Activated CD4-positive, alpha-beta memory T cell treated with anti-CD3 and anti-CD28 coated beads, Interleukin-2, amount 10 ng/mL, durations not matched to agents 7 days and 5 days (primary cell): ENCODE measurements at regions of chrX and their contacts with region 1.

Region 1: DNA sequence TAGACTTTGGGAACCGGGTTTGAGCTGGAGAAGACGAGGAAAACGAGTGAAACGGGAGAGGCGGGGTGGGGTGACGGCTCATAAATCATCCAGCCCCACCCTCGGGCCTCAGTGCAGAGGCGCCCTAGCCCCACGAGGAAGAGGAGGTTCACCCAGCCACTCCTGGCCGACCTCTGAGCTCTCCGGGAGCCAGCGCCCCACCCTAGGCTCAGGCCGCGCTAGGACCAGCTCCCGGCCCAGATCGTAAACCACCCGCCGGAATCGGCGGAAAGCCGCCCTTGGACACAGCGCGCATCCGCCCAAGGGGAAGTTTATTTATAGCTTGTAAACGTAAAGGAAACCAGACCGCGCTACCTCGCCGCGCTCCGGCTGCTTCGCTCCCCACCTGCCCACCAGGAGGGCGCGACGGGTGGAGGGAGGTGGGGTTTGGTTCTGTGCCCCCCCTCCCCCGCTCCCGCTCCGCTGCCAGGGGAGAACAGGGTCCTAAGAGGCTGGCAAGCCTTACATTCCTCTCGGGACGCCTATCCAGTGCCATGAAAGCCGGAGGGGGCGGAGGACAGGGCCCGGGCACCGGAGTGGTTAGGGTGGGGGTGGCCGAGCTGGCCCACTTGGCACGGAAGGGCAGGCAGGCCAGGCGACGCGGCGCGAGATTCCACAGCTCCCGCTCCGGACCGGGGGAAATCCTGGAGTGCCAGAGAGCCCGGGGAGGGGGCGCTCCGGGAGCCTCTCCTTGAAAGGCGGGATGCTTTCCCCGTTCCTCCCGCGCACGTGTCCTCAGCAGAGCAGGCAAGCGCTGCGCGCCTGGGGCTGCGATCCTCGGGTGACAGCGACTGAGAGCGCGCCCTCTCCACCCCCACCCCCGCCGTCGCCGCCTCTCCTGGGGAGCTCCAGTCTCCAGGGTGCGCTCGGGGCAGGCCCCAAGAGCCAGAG is 84.2 kb downstream of the BCOR start:
- DNase-seq: peak; percentile 60
- H3K4me3 Mint-ChIP-seq: peak overlapping the region; percentile 73
- H3K27ac Mint-ChIP-seq: peak overlapping the region; percentile 64
- H3K4me1 Mint-ChIP-seq: peaks cover 31% of the 10 kb centered on the region
- H3K27me3 Mint-ChIP-seq: peaks cover 24% of the 10 kb centered on the region

Region 2: GRCh38 chrX:39815631-39816030 is 197.9 kb before region 1 on chrX:
- CTCF ChIA-PET with region 1: interaction called, 3 read pairs
- POLR2A ChIA-PET with region 1: interaction called, 12 read pairs
- DNase-seq: no peak
- H3K4me3 Mint-ChIP-seq: no peak overlapping the region
- H3K27ac Mint-ChIP-seq: no peak overlapping the region
- H3K4me1 Mint-ChIP-seq: peaks cover 30% of the 10 kb centered on the region
- H3K27me3 Mint-ChIP-seq: peaks cover 10% of the 10 kb centered on the region

Region 3: DNA sequence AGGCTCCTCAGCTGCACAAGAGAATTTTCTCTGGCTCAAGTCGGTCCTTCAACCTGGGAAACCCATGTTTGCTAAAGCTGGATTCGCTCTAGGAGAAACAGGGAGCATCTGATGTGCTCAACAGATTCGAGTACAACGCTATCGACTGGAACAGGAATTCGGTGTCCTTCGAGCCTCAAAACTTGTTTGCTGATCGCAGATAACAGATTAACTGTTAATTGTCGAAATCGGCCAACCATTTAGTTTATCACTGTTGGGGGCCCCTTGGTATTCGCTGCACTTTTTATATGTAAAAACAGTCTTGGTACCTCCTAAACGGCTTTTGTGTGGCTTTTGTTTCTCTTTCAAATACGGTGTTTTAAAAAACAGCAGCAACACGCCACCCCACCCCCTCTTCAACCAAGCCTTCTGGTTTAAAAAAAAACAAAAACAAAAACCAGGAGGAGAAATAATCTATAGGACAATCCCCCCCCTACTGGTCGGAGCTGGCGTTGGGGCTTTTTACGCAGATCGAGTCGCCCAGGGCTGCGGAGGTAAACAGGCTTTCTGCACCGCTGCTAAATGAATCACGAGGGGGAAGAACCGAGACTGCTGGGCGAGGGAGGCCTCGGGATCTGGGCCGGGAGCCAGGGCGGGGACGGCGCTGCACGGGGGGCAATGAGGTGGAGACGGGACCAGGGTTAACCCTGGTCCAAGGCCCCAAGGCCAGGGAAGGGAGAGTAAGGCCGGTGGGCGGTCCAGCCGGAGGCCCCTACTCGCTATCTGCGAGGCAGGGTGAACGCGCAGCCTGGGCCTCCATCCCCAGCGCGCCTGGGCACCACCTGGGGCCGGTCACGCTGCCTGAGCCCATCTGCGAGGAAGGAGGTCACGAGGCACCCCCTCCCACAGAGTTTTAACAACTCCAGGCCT is 155.9 kb after region 1 on chrX:
- CTCF ChIA-PET with region 1: interaction called, 3 read pairs
- POLR2A ChIA-PET with region 1: interaction called, 10 read pairs
- DNase-seq: peak; percentile 88
- H3K4me3 Mint-ChIP-seq: peak overlapping the region; percentile 83
- H3K27ac Mint-ChIP-seq: peak overlapping the region; percentile 97
- H3K4me1 Mint-ChIP-seq: peaks cover 55% of the 10 kb centered on the region
- H3K27me3 Mint-ChIP-seq: no peaks in the 10 kb centered on the region

Region 4: DNA sequence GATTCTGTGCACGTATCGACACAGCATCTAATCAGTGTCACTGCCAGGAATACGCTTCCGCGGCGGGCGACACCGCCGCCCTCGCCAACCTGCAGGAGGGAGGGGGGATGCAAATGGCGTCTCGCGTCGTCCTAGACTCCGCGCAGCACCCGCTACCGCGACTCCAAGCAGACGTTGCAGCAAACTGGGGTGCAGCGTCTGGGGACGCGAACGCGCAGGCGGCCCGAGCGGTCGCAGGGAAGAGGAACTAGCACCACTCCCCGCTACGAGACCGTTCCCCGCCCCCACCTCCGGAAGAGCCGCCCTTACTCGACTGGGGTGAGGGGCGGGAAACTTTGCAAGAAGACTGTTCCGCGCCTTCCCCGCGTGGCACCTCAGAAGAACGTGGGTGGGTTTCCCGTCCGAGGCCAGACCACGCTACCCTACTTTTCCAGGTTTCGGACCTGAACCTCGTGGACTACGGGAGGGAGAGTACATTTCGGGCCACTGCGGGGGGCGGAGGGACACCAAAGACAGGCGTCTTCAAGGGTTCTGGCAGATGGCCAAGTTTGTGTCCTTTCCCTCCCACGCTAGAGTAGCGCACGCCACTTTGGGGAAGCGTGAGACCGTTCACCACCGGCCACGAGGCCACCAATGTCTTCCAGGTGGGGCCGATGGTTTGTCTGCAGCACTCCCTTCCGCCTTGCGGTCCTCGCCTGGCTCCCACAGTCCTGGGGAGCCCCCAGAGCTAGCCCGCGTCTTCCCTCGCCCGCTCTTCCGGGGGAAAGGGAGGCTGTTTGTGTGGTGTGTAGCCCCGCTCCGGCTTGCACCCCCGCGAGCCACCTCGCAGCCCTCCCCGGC is 162.2 kb after region 1 on chrX:
- CTCF ChIA-PET with region 1: no interaction called
- POLR2A ChIA-PET with region 1: interaction called, 10 read pairs
- DNase-seq: peak; percentile 81
- H3K4me3 Mint-ChIP-seq: peak overlapping the region; percentile 83
- H3K27ac Mint-ChIP-seq: peak overlapping the region; percentile 97
- H3K4me1 Mint-ChIP-seq: peaks cover 33% of the 10 kb centered on the region
- H3K27me3 Mint-ChIP-seq: no peaks in the 10 kb centered on the region

Region 5: DNA sequence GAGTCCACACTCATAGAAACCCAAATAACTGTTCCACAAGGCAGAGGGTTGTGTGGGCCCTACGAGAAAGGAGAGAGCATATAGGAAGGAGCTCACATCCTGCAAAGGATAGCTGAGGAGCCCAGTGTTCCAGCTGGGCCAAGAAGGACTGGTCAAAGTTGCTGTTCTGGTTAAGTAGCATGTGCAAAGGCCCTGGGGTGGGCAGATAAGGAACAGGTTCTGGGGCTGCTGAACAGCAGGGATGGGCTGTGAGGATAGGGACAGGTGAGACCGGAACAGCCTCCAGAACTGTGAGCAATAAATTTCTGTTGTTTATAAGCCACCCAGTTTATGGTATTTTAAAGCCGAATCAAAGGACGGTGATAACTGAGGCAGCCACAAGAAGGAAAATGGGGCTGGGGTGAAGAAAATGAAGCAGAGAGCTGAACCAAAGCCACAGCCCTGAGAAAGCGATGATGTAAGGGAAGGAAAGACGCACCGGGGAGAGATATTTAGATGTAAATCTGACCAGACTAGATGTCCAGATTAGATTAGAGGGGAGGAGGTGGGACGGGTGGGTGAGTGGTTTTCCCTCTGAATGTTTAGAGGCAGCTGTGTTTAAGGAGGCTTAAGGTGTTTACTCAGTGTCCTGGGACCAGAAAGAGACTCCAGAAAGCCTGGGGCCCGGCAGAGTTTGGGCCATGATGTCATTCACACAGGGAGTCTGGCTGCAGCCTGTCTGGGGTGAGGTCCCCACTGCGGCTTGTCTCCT is 265.0 kb after region 1 on chrX:
- CTCF ChIA-PET with region 1: no interaction called
- POLR2A ChIA-PET with region 1: no interaction called
- DNase-seq: peak; percentile 73
- H3K4me3 Mint-ChIP-seq: no peak overlapping the region
- H3K27ac Mint-ChIP-seq: peak overlapping the region; percentile 59
- H3K4me1 Mint-ChIP-seq: peaks cover 42% of the 10 kb centered on the region
- H3K27me3 Mint-ChIP-seq: peaks cover 6% of the 10 kb centered on the region

Region 6: DNA sequence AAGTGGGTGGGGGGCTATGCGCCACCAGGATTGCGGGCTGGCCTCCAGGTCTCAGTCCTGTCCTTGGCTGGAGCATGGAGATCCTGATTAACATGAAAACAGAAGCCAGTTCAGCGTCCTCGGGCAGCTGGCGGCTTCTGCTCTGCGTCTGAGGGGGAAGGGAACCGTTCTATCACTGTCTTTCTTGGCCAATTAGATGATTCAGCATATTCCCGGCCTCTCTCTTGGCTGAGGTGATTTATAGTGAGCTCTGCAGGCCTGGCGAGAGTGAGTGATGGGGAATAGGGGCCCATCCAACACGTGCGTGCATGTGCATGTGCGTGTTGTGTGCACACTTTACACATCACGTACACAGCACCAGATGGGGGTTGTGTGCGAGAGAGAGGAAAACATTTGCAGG is 421.4 kb after region 1 on chrX:
- CTCF ChIA-PET with region 1: no interaction called
- POLR2A ChIA-PET with region 1: no interaction called
- DNase-seq: no peak
- H3K4me3 Mint-ChIP-seq: no peak overlapping the region
- H3K27ac Mint-ChIP-seq: no peak overlapping the region
- H3K4me1 Mint-ChIP-seq: peaks cover 2% of the 10 kb centered on the region
- H3K27me3 Mint-ChIP-seq: no peaks in the 10 kb centered on the region